H1 (cell line): ENCODE measurements at regions of chr2 and their contacts with region 1.

Region 1: GRCh38 chr2:97697252-97698235 is 15.8 kb upstream of the ZAP70 start:
- DNase-seq: peak; percentile 67 to 95
- H3K4me3 ChIP-seq: no peak overlapping the region
- H3K27ac ChIP-seq: no peak overlapping the region
- H3K4me1 ChIP-seq: peaks cover 0 to 2% (median 0%) of the 10 kb centered on the region in 4 experiments; a peak in 2 of 7 replicates
- H3K27me3 ChIP-seq: no peaks in the 10 kb centered on the region; a peak in 1 of 7 replicates
- CTCF ChIP-seq: peak; percentile 80 to 98 (median 88)
- EP300 ChIP-seq: no peak
- POLR2A ChIP-seq: no peak
- RAD21 ChIP-seq: peak; percentile 97 to 100

Region 2: DNA sequence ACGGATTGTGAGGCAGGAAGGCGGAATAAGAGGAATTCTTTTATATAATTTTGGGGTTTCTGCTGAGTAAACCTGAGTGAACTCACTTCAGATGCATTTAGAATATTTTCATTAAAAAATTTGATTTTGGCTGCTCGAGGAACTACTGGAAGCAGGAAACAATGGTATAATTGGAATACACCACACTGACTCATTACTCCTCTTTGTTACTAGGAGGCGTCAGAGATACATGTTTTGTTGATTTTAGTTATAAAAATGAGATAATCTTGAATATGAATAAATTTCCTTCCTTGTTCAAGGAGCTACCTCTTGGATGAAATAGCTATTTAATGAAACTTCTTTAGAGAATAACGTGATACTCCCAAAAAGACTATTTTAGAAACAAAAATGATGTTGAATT is 487.2 kb before region 1 on chr2:
- CTCF ChIA-PET with region 1: no interaction called
- POLR2A ChIA-PET with region 1: no interaction called
- DNase-seq: no peak
- H3K4me3 ChIP-seq: no peak overlapping the region
- H3K27ac ChIP-seq: no peak overlapping the region
- H3K4me1 ChIP-seq: no peaks in the 10 kb centered on the region
- H3K27me3 ChIP-seq: no peaks in the 10 kb centered on the region
- CTCF ChIP-seq: no peak
- EP300 ChIP-seq: no peak
- POLR2A ChIP-seq: no peak
- RAD21 ChIP-seq: 0 out of 4 replicates have a peak, but pooled peaks of 1 of the 2 experiments have one; percentile 8

Region 3: GRCh38 chr2:97645695-97646629 is 51.6 kb before region 1 on chr2 and contains the start of gene COX5B:
- CTCF ChIA-PET with region 1: interaction called, 73 read pairs
- POLR2A ChIA-PET with region 1: interaction called, 6 read pairs
- DNase-seq: peak; percentile 90 to 95
- H3K4me3 ChIP-seq: peak within 1 kb of the TSS; percentile 95 to 100 (median 96)
- H3K27ac ChIP-seq: peak within 1 kb of the TSS; percentile 72
- H3K4me1 ChIP-seq: peaks cover 0 to 6% (median 0%) of the 10 kb centered on the region in 4 experiments; a peak in 2 of 7 replicates
- H3K27me3 ChIP-seq: no peaks in the 10 kb centered on the region; a peak in 1 of 7 replicates
- CTCF ChIP-seq: no peak
- EP300 ChIP-seq: no peak
- POLR2A ChIP-seq: peak; percentile 76 to 79
- RAD21 ChIP-seq: no peak
- total RNA-seq, gene COX5B: 233 and 247 TPM in 2 replicates

Region 4: DNA sequence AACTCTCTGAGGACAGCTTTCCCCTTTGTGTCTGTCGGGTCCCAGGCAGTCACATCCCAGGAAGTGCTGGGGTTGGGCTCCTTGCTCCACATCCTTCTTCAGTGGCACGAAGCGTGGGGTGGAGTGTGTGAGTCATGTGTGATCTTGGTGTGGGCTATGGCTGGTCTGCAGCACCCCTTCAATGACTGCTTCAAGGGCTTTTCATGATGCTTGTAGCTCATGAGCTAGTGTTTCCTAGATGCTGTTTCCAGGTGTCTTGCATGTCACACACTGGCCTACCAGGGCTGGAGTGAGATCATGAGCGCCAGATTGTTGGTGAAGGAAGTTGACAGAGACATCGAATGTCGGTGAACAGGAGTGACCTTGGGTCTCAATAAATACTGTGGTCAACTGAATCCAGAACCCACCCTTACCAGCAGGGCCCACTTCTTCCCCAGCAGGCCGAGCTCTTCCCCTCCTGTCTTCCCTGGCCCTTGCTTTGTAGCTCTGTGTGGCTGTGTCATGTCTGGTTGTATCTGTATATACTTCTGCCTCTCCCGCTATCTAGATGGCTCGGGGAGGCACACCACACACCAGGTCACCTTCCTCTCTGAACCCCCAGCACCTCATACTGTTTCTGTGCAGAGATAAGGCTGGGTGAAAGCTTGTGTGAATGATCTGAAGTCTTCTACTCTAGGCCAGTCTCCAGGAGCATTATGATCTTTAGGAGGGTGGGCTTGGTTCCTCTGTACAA is 24.2 kb before region 1 on chr2:
- CTCF ChIA-PET with region 1: interaction called, 35 read pairs
- POLR2A ChIA-PET with region 1: no interaction called
- DNase-seq: no peak
- H3K4me3 ChIP-seq: no peak overlapping the region
- H3K27ac ChIP-seq: no peak overlapping the region
- H3K4me1 ChIP-seq: 0 out of 7 replicates have a peak, but pooled peaks cover 0 to 3% (median under 1%) of the 10 kb centered on the region in 4 experiments
- H3K27me3 ChIP-seq: no peaks in the 10 kb centered on the region
- CTCF ChIP-seq: no peak
- EP300 ChIP-seq: no peak
- POLR2A ChIP-seq: no peak
- RAD21 ChIP-seq: no peak

Region 5: DNA sequence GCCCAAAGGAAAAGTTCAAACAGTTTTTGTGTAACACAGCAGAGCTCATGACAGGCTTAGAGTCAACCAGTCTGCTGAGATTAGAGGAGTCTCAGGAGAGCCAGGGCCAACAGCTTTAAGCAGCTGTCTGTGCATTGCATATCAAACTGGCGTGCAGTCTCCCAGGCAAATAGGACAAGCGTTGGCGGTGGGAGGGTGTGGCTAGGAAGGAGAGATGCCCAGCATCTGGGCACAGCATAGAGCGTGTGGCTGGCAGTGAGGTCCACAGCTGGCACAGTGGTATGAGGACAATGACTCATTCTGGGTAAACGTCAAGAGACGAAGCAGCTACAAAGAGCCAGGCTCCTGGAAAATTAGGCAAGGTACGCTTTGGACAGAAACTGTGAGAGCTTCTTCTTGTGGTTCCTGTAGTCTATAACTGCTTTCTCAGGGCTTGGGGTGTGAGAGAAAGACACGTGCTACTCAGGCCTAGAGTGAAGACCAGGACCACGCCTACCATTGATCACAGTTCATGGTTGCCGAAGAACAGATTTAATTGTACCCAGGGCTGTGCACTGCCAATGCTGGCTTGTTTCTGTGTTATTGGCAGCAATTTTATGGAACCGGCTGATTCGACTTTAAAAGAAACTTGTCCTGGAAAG is 30.7 kb after region 1 on chr2:
- CTCF ChIA-PET with region 1: interaction called, 22 read pairs
- POLR2A ChIA-PET with region 1: no interaction called
- DNase-seq: no peak
- H3K4me3 ChIP-seq: no peak overlapping the region
- H3K27ac ChIP-seq: no peak overlapping the region
- H3K4me1 ChIP-seq: no peaks in the 10 kb centered on the region; a peak in 1 of 7 replicates
- H3K27me3 ChIP-seq: no peaks in the 10 kb centered on the region
- CTCF ChIP-seq: no peak
- EP300 ChIP-seq: no peak
- POLR2A ChIP-seq: no peak
- RAD21 ChIP-seq: no peak

Region 6: GRCh38 chr2:97751752-97752151 is 54.2 kb after region 1 on chr2:
- CTCF ChIA-PET with region 1: interaction called, 149 read pairs
- POLR2A ChIA-PET with region 1: no interaction called
- DNase-seq: no peak
- H3K4me3 ChIP-seq: no peak overlapping the region; a peak in 1 of 8 replicates
- H3K27ac ChIP-seq: no peak overlapping the region
- H3K4me1 ChIP-seq: peaks cover 0 to 10% (median 3%) of the 10 kb centered on the region in 4 experiments; a peak in 4 of 7 replicates
- H3K27me3 ChIP-seq: no peaks in the 10 kb centered on the region
- CTCF ChIP-seq: no peak
- EP300 ChIP-seq: no peak
- POLR2A ChIP-seq: no peak
- RAD21 ChIP-seq: no peak